Tibial artery (tissue), 4 donors: ENCODE measurements at regions of chr3 and their contacts with region 1.

Region 1: GRCh38 chr3:49171119-49171774 is at the start of gene KLHDC8B:
- DNase-seq: peak; percentile 81 to 91
- H3K4me3 ChIP-seq: peak within 1 kb of the TSS; percentile 85 to 88
- H3K27ac ChIP-seq: peak within 1 kb of the TSS; percentile 91 to 97
- H3K4me1 ChIP-seq: peaks cover 0 to 51% (median 44%) of the 10 kb centered on the region in 4 donors
- H3K27me3 ChIP-seq: no peaks in the 10 kb centered on the region
- CTCF ChIP-seq: peak; percentile 93 to 97

Region 2: GRCh38 chr3:49276475-49277382 is 105.5 kb after region 1 on chr3 and contains the start of gene C3orf62:
- intact Hi-C with region 1: loop called (anchors 5 kb)
- DNase-seq: peak; percentile 89 to 96
- H3K4me3 ChIP-seq: peak within 1 kb of the TSS; percentile 54 to 55
- H3K27ac ChIP-seq: peak within 1 kb of the TSS; percentile 90 to 96
- H3K4me1 ChIP-seq: peaks cover 0 to 21% (median 11%) of the 10 kb centered on the region in 4 donors
- H3K27me3 ChIP-seq: no peaks in the 10 kb centered on the region
- CTCF ChIP-seq: no peak

Region 3: DNA sequence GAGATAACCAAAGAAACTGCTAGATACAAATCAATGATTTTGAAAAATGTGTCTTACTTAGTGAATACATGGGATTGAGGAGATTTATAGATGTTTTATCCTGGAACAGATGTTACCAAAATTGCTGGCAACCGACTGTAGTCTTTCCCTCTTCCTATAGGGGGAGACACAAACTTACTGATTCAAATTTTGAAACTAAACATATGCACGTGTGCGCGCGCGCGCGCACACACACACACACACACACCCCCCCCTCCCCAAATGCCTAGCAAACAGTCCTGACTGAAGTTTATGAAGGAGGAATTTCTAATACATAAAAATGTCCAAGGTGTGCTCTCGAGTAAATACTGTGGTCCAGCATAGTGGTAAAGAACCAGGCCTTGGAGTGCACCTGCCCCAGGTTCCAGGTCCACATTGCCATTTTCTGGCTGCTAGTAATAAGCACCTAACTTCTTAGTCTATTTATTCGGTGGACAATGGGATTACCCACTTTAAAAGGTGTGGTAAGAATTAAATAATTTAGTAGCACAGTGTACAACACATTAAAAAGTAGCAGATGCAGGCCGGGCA is 124.3 kb after region 1 on chr3:
- intact Hi-C with region 1: loop called (anchors 2 kb)
- DNase-seq: no peak
- H3K4me3 ChIP-seq: no peak overlapping the region
- H3K27ac ChIP-seq: peak overlapping the region in 1 of 2 donors; percentile 78
- H3K4me1 ChIP-seq: peaks cover 0 to 16% (median 11%) of the 10 kb centered on the region in 4 donors
- H3K27me3 ChIP-seq: no peaks in the 10 kb centered on the region
- CTCF ChIP-seq: peak; percentile 43 to 44

Region 4: DNA sequence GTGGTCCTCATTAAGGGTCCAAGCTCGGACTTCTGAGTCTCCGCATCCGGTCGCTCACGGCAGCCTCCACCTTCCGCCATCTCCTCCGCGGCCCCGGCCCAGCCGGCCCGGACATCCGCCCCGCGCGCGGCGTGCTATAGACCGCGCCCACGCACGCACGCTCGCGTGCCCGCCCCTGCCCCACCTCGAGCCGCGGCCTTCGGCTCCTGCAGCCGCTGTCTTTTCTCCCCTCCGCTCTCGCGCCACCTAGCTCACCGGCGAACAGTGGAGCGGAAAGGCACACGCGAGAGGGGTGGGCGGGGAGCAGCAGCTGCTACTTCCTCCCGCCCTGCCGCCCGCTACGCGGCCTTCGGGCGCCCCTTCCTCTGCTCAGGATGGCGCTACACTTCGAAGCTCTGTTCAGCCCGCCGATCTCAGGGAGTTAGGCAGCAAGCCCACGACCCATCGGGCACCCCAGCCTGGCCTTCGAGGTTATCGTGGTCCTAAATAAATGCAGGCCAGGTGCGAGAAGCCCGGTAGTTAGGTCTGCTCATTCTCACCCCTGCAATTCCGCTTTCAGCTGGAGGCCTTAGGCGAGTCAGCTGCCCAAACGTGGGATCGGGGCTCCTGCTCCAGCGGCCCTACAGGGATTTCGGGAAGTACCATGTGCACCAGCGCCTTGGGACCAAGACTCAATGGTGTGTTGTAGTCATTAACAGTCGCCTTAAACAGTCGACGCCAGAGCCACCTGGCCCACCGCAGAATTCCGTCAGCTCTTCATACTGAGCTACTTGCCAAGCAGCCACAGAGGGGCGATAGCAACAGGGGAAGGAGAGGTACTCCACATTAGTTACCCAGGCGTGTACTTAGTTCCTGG is 168.9 kb after region 1 on chr3 and contains the start of gene USP4:
- intact Hi-C with region 1: loop called (anchors 10 kb)
- DNase-seq: peak; percentile 89 to 94
- H3K4me3 ChIP-seq: peak within 1 kb of the TSS; percentile 76 to 83
- H3K27ac ChIP-seq: peak within 1 kb of the TSS; percentile 87
- H3K4me1 ChIP-seq: peaks cover 0 to 38% (median 11%) of the 10 kb centered on the region in 4 donors
- H3K27me3 ChIP-seq: no peaks in the 10 kb centered on the region
- CTCF ChIP-seq: peak in 1 of 2 experiments; percentile 20

Region 5: GRCh38 chr3:49454458-49454857 is 283.2 kb after region 1 on chr3:
- intact Hi-C with region 1: loop called (anchors 5 kb)
- DNase-seq: no peak
- H3K4me3 ChIP-seq: no peak overlapping the region
- H3K27ac ChIP-seq: peak overlapping the region in 1 of 2 donors; percentile 63
- H3K4me1 ChIP-seq: peaks cover 0 to 21% (median 10%) of the 10 kb centered on the region in 4 donors
- H3K27me3 ChIP-seq: no peaks in the 10 kb centered on the region
- CTCF ChIP-seq: peak; percentile 13 to 20